ENCODE measurements at regions of chr16 and their contacts with region 1.

Region 1: DNA sequence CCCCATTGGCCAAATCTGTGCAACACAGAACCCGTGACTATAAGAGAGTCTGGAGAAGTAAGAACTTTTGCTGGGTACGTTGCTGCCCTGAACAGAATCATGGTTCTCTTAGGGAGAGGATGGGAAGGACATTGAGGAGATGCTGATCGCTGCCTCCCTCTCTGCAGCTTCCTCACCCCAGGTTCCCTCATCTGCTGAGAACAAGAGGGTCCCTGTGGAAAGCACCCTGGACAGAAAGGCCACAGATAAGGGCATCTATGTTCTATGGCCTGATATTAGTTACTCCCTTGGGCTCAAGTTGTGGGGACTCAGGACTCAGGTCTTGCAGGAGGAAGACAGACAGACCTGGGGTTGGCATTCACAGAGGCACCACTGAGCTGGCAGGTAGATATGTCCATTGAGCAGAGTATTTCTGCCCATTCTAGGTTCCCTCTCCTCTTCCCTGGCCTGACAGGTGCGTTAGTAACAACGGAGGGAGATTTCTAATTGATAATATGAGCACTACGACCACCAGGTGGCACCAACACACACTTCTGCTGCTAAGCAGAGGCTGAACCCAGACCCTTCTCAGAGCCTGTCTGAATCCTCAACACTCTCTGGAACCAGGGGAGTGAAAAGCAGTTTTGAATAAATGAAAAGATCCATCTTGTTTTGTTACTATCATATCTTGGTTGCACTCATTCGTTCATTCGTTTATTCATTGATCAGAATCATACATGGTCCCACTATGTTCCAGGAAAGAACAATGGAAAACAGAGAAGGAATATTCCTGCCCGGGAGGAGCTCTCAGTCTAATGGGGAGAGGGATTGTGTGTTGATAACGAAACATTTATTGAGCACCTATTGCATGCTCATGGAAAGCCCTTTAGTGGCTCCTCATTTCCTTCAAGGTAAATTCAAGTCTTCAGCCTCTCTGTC is 56.4 kb downstream of the SLC6A2 start:
- DNase-seq: peak in 9 of 10 donors; percentile 54 to 79 (median 60)
- H3K4me3 ChIP-seq: no peak overlapping the region
- H3K27ac ChIP-seq: no peak overlapping the region
- H3K27me3 ChIP-seq: peaks cover 0 to 13% (median 0%) of the 10 kb centered on the region in 45 donors
- CTCF ChIP-seq: peak; percentile 53 to 92 (median 78)

Region 2: DNA sequence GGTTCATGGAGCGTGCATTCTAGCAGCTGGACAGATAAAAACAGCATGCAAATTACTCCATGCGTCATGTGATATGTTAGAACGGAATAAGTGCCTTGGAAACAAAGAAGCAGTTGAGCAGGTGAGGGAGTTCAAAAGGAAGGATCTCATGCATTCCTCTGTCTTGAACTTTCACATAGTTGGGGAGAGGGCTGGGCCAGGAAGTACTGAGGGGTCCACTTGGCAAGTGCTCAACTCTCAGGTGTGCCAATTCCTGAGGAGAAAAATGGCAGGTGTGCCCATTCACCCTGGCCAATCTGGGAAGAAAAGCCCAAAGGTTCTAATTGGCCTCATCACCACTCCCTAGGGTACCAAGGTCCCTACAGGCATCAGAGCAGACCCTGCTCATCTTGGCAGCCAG is 52.9 kb after region 1 on chr16:
- intact Hi-C with region 1: no loop called
- DNase-seq: no peak
- H3K4me3 ChIP-seq: no peak overlapping the region
- H3K27ac ChIP-seq: no peak overlapping the region
- H3K27me3 ChIP-seq: peaks cover 0 to 31% (median 0%) of the 10 kb centered on the region in 45 donors
- CTCF ChIP-seq: no peak

Region 3: GRCh38 chr16:56332464-56333079 is 620.4 kb after region 1 on chr16:
- intact Hi-C with region 1: loop called in 1 of 2 experiments (anchors 10 kb)
- DNase-seq: peak in 9 of 10 donors; percentile 65 to 81 (median 76)
- H3K4me3 ChIP-seq: no peak overlapping the region
- H3K27ac ChIP-seq: peak overlapping the region in 56 of 59 donors; percentile 45 to 100 (median 76)
- H3K27me3 ChIP-seq: no peaks in the 10 kb centered on the region
- CTCF ChIP-seq: peak in 53 of 56 donors; percentile 13 to 72 (median 50)

Measured in dorsolateral prefrontal cortex (tissue), 120 donors.